Activated T-helper 2 cell treated with anti-CD3 and anti-CD28 coated beads, Interferon-gamma antibody, Interleukin-2, Interleukin-4, amounts not matched to agents 10 μg/mL and 5 μg/mL and 100 μg/mL, durations not matched to agents 14 hours and 24 hours and 36 hours (primary cell): ENCODE measurements at regions of chr15 and their contacts with region 1.

Region 1: GRCh38 chr15:85582131-85583079 is 202.0 kb downstream of the AKAP13 start:
- DNase-seq: peak; percentile 68
- H3K4me3 Mint-ChIP-seq: peak overlapping the region; percentile 83
- H3K27ac Mint-ChIP-seq: peak overlapping the region; percentile 98
- H3K4me1 Mint-ChIP-seq: peaks cover 73% of the 10 kb centered on the region
- H3K27me3 Mint-ChIP-seq: no peaks in the 10 kb centered on the region

Region 2: GRCh38 chr15:85318048-85318731 is 264.2 kb before region 1 on chr15:
- intact Hi-C with region 1: loop called (anchors 1 kb)
- DNase-seq: peak; percentile 55
- H3K4me3 Mint-ChIP-seq: peak overlapping the region; percentile 41
- H3K27ac Mint-ChIP-seq: peak overlapping the region; percentile 91
- H3K4me1 Mint-ChIP-seq: peaks cover 66% of the 10 kb centered on the region
- H3K27me3 Mint-ChIP-seq: no peaks in the 10 kb centered on the region

Region 3: DNA sequence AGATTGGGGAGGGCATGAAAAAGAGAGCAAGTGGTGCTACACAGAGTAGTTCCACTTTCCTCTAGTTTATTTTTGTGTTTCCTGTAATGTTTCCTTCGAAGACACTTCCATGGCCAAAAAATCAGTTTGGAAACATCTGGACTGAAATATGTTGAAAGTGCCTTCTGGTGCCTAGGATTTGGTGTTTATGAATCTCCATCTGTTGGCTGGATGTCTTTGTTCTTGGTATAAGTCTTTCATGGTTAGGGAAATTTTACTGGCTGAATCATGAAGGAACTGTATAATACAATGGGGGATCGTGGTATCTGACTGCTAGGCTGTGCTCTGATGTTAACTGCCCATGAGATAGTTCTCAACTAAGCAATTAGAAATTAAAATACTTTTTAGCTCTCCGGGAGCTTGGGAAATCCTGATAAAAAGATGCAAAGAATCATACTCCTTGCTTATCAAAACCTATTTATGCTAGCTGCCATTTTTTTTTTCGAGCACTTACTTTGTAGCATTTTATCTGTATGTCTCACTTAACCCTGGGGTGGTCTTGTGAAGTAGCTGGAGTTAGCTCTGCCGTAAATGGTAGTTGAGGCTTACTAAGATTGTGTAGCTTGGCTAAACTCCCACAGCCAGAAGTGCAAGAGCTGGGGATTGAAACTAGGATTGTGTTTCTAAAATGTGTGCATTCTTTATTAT is 180.1 kb before region 1 on chr15:
- intact Hi-C with region 1: no loop called
- DNase-seq: no peak
- H3K4me3 Mint-ChIP-seq: no peak overlapping the region
- H3K27ac Mint-ChIP-seq: no peak overlapping the region
- H3K4me1 Mint-ChIP-seq: peaks cover 50% of the 10 kb centered on the region
- H3K27me3 Mint-ChIP-seq: no peaks in the 10 kb centered on the region

Region 4: DNA sequence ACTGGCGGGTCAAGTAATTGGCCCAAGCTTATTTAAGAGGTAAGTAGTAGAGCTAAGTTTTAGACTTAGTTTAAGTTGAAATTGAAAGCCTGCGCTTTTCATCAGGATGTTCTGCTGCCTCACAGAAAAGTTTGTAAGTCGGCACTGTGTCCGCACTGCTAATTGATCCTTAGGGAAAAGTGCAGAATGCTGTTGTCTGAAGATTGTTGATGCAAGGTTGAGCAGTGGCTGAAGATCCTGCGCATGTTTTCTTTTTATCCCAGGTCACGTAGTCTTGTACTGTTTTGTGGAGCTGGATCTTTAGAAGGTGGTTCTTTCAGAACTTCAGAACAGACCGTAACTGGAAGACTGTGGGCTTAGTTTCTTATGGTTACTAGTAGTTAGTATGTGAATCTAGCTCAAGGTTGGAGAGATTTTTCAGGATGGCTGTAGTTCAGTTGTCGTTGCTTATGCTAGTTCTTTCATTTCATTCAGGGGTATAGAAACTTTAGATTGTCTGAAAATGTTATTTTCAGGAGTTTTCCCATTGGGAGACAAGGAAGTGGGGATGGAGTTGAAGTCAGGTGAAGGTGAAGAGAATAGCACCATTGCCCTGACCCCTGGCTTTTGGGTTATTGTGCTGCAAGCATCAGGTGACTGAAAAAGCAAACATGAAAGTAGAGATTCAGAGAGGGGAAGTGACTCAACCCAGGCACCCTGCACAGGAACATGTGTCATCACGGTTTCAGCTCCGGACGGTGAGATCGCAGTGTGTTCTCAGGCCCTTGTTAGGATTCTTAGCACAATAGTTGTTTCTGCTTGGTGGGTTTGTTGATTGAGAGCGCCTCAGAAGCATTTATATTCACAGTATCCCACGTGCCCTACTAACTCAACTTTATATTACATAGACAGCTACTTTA is 169.2 kb before region 1 on chr15:
- intact Hi-C with region 1: loop called (anchors 5 kb)
- DNase-seq: peak; percentile 71
- H3K4me3 Mint-ChIP-seq: peak overlapping the region; percentile 55
- H3K27ac Mint-ChIP-seq: peak overlapping the region; percentile 87
- H3K4me1 Mint-ChIP-seq: peaks cover 64% of the 10 kb centered on the region
- H3K27me3 Mint-ChIP-seq: no peaks in the 10 kb centered on the region

Region 5: DNA sequence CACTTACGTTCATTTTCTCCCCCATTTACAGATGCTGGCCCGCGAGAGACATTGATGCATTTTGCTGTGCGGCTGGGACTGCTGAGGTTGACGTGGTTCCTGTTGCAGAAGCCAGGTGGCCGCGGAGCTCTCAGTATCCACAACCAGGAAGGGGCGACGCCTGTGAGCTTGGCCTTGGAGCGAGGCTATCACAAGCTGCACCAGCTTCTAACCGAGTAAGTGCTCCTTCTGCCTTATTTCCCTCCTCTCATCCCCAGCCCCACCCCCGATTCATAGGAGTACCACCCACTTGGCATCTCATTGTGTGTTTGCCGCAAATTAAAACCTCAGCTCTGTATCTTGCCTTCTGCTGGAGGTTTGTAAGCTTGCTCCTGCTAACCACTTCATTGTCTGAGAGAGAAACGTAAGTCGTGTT is 38.7 kb before region 1 on chr15:
- intact Hi-C with region 1: loop called (anchors 1 kb)
- DNase-seq: peak; percentile 31
- H3K4me3 Mint-ChIP-seq: peak overlapping the region; percentile 55
- H3K27ac Mint-ChIP-seq: peak overlapping the region; percentile 69
- H3K4me1 Mint-ChIP-seq: peaks cover 77% of the 10 kb centered on the region
- H3K27me3 Mint-ChIP-seq: no peaks in the 10 kb centered on the region

Region 6: GRCh38 chr15:85597155-85597815 is 14.9 kb after region 1 on chr15:
- intact Hi-C with region 1: loop called (anchors 1 kb)
- DNase-seq: no peak
- H3K4me3 Mint-ChIP-seq: peak overlapping the region; percentile 45
- H3K27ac Mint-ChIP-seq: peak overlapping the region; percentile 55
- H3K4me1 Mint-ChIP-seq: peaks cover 39% of the 10 kb centered on the region
- H3K27me3 Mint-ChIP-seq: no peaks in the 10 kb centered on the region

Region 7: DNA sequence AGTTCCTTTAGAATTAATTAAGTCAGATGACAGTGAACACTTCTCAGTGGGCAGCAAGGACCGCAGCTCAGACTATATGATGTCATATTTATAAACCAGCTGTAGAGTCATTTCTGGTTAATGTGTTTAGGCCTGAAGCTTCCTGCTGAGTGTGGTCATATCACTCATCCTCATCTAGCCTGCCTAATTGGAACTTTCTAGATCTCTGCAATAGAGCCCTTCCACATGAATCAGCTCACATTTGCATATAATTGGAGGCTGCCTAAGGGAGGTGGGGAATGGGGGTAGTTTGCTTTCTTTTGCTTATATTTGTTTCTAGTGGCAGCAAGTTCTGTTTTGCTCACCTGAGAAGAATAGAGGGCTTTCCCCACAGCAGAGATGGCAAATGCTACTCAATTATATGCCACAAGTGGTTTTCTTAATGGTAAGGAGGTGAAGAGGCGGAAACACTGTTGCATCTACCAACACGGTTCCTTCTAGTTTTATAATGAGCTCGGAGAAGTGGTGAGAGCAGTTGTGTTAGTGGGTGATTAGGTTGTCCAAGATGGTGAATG is 64.2 kb after region 1 on chr15:
- intact Hi-C with region 1: loop called (anchors 2 kb)
- DNase-seq: peak; percentile 20
- H3K4me3 Mint-ChIP-seq: peak overlapping the region; percentile 9
- H3K27ac Mint-ChIP-seq: peak overlapping the region; percentile 89
- H3K4me1 Mint-ChIP-seq: peaks cover 42% of the 10 kb centered on the region
- H3K27me3 Mint-ChIP-seq: no peaks in the 10 kb centered on the region

Region 8: GRCh38 chr15:85707519-85708338 is 125.3 kb after region 1 on chr15:
- intact Hi-C with region 1: loop called (anchors 1 kb)
- DNase-seq: no peak
- H3K4me3 Mint-ChIP-seq: peak overlapping the region; percentile 80
- H3K27ac Mint-ChIP-seq: peak overlapping the region; percentile 98
- H3K4me1 Mint-ChIP-seq: peaks cover 74% of the 10 kb centered on the region
- H3K27me3 Mint-ChIP-seq: no peaks in the 10 kb centered on the region